ENCODE measurements at regions of chr4 and their contacts with region 1.

Region 1: DNA sequence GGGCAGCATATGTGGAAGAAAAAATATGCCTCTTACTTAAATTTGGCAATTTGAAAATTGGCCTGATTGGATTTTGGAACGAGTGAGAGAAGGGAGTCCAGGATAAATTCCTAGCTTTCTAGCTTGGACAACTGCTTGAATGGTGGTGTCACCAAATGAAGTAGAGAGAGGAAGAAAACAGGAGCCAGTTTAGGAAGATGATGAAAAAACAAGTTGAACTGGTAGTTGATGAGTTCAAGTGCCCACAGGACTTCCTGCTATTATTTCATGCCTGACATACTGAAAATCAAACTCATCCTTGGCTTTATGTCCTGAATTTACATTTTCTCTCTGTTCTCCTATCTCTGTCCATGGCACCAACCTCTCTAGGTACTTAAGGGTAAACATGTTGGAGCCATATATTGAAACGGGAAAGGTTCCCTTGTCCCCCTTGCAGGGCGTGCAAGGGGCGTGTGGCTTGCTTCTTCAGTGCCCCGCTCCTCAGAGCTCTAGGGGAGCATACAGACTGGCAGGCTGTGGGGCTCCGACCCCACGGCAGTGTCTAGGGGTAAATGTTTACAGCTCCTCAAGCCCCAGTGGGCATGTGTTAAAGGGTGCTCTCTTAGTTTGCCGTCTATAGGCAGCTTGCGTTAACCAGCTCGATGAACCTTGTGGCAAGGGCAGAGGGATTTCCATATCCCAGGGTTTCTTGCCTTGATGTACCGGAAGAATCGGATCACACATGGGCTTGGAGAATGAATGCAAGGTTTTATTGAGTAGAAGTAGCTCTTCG is 250.7 kb upstream of the PGRMC2 start:
- DNase-seq: no peak
- H3K4me3 ChIP-seq: no peak overlapping the region
- H3K27ac ChIP-seq: no peak overlapping the region
- H3K4me1 ChIP-seq: no peaks in the 10 kb centered on the region
- H3K27me3 ChIP-seq: no peaks in the 10 kb centered on the region
- CTCF ChIP-seq: no peak

Region 2: GRCh38 chr4:128006592-128006991 is 531.7 kb before region 1 on chr4:
- CTCF ChIA-PET with region 1: interaction called, 10 read pairs
- POLR2A ChIA-PET with region 1: no interaction called
- intact Hi-C with region 1: no loop called
- DNase-seq: no peak
- H3K4me3 ChIP-seq: no peak overlapping the region
- H3K27ac ChIP-seq: no peak overlapping the region
- H3K4me1 ChIP-seq: no peaks in the 10 kb centered on the region
- H3K27me3 ChIP-seq: no peaks in the 10 kb centered on the region
- CTCF ChIP-seq: no peak

Region 3: GRCh38 chr4:128793859-128794672 is 255.8 kb after region 1 on chr4:
- CTCF ChIA-PET with region 1: no interaction called
- POLR2A ChIA-PET with region 1: no interaction called
- intact Hi-C with region 1: no loop called
- DNase-seq: no peak
- H3K4me3 ChIP-seq: no peak overlapping the region
- H3K27ac ChIP-seq: no peak overlapping the region
- H3K4me1 ChIP-seq: no peaks in the 10 kb centered on the region
- H3K27me3 ChIP-seq: no peaks in the 10 kb centered on the region
- CTCF ChIP-seq: no peak

Region 4: GRCh38 chr4:129218360-129218759 is 680.1 kb after region 1 on chr4:
- CTCF ChIA-PET with region 1: no interaction called
- POLR2A ChIA-PET with region 1: no interaction called
- intact Hi-C with region 1: no loop called
- DNase-seq: peak; percentile 26
- H3K4me3 ChIP-seq: no peak overlapping the region
- H3K27ac ChIP-seq: no peak overlapping the region
- H3K4me1 ChIP-seq: no peaks in the 10 kb centered on the region
- H3K27me3 ChIP-seq: no peaks in the 10 kb centered on the region
- CTCF ChIP-seq: peak; percentile 36